Dendritic cell treated with granulocyte-macrophage colony-stimulating factor and Interleukin-4, amounts not matched to agents 40 ng/mL and 50 ng/mL, for 4 days (primary cell): ENCODE measurements at regions of chr6 and their contacts with region 1.

Region 1: DNA sequence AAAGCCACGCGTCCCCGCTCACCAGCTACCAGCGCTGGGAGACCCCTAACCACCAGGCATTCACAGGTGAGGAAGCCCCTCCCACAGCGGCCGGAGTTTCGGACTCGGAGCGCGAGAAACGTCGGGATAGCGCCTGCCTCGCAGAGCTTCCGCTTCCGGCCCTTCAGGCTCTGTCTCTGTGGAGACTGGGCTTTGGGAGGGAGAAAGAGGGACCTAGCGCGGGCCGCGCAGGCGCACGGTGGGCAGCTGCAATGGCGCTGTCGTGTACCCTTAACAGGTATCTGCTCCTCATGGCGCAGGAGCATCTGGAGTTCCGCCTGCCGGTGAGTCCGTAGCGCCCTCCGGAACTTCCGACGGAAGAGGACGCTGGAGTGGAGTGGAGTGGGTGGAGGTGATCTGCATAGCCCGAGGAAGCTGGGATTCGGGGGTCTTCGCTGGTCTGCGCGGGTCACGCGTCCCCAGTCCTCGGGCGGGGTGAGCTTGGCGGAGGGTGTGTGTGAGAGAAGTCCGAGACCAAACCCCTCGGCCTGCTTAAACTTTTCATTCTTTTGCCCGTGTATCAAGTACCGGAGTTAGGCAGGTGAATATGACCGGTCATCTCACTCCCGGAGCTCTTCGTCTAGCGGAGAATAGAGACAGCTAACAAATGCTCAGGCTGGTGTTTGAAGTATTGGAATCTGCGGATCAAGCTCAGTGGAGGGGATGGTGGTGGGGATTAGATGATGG is at the start of gene TRMT11:
- H3K4me3 Mint-ChIP-seq: no peak within 1 kb of the TSS
- H3K27ac Mint-ChIP-seq: no peak within 1 kb of the TSS
- H3K4me1 Mint-ChIP-seq: no peaks in the 10 kb centered on the region
- H3K27me3 Mint-ChIP-seq: no peaks in the 10 kb centered on the region

Region 2: DNA sequence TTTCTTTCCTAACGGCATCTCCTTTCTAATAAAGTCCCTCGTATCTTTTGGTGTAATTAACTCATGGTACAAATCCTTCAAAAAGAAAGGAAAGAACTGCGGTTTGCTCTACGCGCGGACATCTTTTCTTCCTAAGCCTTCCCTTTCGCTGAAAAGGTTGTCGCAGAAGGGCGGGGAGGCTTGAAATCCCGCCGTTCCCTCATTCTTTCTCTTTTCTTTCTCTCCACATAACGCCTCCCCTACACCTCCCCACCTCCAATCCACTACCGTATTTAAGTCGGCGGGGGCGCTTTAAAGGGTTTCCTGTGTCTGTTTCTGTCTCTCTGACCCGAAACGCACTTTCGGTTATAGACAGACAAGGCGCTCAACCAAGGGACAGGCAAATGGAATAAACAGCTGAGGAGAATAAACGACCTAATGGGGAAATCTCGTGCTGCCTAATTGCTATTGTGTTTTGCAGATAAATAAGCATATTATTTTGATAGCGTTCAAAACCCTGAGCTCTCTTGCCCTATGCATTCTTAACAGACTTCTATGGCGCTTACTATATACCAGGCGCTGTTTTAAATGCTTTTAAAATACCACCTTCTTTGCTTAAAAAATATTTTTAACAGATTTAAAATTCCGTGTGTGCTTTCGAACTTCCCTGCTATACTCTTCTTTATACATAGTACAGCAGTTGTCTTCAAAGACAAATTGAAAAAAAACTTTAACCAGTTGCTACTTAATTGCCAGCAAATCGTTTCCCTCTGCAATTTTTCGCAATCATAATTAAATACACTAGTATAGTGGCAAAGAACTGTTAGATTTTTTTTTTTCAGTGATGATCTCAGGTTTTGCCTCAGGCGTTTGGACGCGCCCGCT is 239.5 kb before region 1 on chr6:
- intact Hi-C with region 1: no loop called
- H3K4me3 Mint-ChIP-seq: peak overlapping the region; percentile 83
- H3K27ac Mint-ChIP-seq: no peak overlapping the region
- H3K4me1 Mint-ChIP-seq: peaks cover 33% of the 10 kb centered on the region
- H3K27me3 Mint-ChIP-seq: peaks cover 79% of the 10 kb centered on the region

Region 3: GRCh38 chr6:127342946-127343808 is 1356.7 kb after region 1 on chr6 and contains the start of gene ECHDC1:
- intact Hi-C with region 1: loop called (anchors 10 kb)
- H3K4me3 Mint-ChIP-seq: no peak within 1 kb of the TSS
- H3K27ac Mint-ChIP-seq: no peak within 1 kb of the TSS
- H3K4me1 Mint-ChIP-seq: peaks cover 17% of the 10 kb centered on the region
- H3K27me3 Mint-ChIP-seq: no peaks in the 10 kb centered on the region